HCT116 (cell line): ENCODE measurements at regions of chr17 and their contacts with region 1.

Region 1: DNA sequence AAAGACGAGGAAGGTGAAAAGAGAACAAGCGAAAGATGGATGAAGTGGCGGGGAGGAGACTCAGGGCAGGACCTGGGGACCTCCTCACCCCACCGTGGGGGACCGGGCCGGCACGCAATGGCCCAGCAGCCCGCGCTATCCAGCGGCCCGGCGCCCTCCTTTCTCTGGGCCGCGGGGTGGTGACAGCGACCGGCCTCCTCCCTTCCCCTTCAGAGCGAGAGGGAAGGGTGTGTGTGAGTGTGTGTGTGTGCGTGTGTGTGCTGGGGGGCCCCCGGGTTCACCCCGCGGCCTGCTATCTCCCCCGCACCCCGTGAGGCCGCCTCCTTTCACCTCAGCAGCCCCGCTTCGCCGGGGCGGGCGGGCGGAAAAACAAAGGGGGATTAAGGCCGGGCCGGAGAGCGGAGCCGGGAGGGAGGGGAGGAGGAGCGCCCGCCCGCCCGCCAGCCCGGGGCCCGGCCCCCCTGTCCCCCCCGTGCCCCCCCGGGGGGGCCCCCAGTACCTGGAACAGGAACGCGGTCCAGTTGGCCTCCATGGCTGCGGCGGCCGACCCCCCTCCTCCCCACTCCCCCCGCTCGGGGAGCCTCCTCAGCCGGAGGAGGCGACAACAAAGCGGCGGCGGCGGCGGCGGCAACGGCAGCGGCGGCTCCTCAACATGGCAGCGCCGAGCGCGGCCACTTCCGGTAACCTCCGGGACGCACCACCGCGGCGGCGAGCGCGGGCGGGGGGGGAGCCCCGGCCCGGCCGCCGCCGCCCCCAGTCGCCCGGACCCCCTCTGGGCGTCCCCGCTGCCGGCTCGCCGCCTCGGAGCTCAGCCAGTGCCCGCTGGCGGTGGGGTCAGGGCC is at the start of gene VEZF1:
- DNase-seq: peak; percentile 48
- ATAC-seq: peak; percentile 64
- H3K4me3 ChIP-seq: peak within 1 kb of the TSS; percentile 67 to 73
- H3K27ac ChIP-seq: peak within 1 kb of the TSS; percentile 96
- H3K4me1 ChIP-seq: peaks cover 62 to 71% of the 10 kb centered on the region in 2 experiments
- H3K27me3 ChIP-seq: no peaks in the 10 kb centered on the region
- CTCF ChIP-seq: no peak
- POLR2A ChIP-seq: peak; percentile 32
- RAD21 ChIP-seq: 0 out of 2 replicates have a peak, but pooled peaks have one; percentile 10
- total RNA-seq, gene VEZF1: 70.2 TPM

Region 2: DNA sequence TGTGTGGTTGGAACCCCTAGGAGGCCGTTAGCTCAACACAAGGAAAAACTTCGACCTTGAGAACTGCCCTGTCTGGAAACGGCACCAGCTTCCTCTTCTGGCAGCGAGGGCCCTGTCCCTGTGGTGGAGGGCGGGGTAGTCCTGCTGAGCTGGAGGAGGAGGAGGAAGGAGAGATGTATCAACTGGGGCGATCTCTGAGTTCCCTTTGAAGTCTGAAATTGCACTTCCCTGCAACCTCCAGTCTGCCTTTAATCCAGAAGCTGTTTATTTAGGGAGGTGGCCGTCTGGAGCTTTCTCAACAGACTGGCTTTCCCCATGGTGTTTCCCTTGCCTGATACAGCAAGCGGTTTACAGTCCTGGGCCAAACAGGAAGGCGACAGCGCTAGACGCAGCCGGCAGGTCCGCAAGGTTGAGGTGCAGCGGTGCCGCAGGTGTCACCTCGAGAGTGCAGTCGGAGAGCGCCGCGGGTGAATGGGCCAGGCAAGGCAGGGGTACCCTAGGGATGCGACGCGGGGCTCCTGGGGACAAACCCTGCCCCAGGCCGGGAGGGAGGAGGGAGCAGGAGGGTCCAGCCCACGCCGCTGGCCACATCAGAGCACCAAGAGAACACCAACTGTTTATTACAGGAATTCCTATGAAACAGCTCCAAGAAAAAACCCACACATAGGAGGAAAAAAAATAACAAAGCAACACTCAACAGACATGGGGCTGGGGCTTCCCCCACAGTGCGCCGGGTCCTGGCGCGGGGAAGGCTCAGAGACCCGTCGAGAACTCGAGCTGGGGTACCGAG is 126.6 kb before region 1 on chr17:
- CTCF ChIA-PET with region 1: interaction called, 288 read pairs
- POLR2A ChIA-PET with region 1: interaction called, 9 read pairs
- RAD21 ChIA-PET with region 1: interaction called, 3 to 4 read pairs
- intact Hi-C with region 1: no loop called
- DNase-seq: peak; percentile 75
- ATAC-seq: peak; percentile 68
- H3K4me3 ChIP-seq: peak overlapping the region; percentile 38 to 51
- H3K27ac ChIP-seq: peak overlapping the region; percentile 79
- H3K4me1 ChIP-seq: peaks cover 54 to 80% of the 10 kb centered on the region in 2 experiments
- H3K27me3 ChIP-seq: no peaks in the 10 kb centered on the region
- CTCF ChIP-seq: 0 out of 6 replicates have a peak, but pooled peaks of 1 of the 3 experiments have one; percentile 5
- POLR2A ChIP-seq: no peak
- RAD21 ChIP-seq: no peak

Region 3: DNA sequence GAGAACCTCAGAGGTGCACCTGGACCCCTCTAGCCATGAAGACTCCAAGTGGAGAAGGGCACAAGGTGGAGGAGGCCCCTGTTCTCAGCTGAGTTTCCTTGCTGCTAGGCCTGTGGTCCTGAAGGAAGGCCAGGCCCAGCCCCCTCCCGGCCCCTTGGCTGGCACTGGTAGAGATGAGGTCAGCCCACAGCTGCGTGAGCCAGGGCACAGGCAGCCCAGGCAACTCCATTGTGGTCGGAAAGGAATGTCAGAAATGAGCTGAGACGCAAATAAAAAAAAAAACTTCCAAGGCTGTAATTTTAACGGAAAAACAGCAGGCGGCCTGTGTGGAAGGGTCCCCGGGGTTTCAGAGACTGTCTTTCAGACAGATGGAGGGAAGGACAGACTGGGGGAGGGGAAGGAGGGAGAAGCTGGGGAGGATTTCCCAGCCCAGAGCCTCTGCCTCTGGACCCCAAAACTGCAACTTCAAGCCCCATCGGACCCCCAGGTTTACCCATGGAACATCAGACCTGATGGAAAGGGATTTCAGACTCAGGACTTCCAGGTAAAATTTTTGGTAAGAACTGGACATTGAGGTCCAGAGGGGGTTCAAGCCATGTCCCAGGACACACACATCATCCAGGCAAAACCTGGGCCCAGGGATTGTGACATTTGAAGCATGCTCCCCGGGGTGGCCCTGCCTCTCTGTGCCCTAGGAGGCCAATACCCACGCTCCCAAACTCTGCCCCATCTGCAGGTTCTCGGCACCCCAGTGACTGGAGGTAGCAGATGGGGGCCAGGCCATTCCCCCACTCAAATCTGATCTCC is 112.3 kb before region 1 on chr17:
- CTCF ChIA-PET with region 1: interaction called, 3 read pairs
- POLR2A ChIA-PET with region 1: no interaction called
- RAD21 ChIA-PET with region 1: interaction called in 1 of 2 experiments, 3 read pairs
- intact Hi-C with region 1: loop called (anchors 5 kb)
- DNase-seq: peak; percentile 90
- ATAC-seq: peak; percentile 81
- H3K4me3 ChIP-seq: peak overlapping the region; percentile 17 to 45
- H3K27ac ChIP-seq: peak overlapping the region; percentile 68
- H3K4me1 ChIP-seq: peaks cover 71 to 98% of the 10 kb centered on the region in 2 experiments
- H3K27me3 ChIP-seq: no peaks in the 10 kb centered on the region
- CTCF ChIP-seq: peak in 2 of 3 experiments; percentile 55 to 60; a peak in 4 of 6 replicates
- POLR2A ChIP-seq: no peak
- RAD21 ChIP-seq: no peak

Region 4: GRCh38 chr17:57892146-57892828 is 95.5 kb before region 1 on chr17:
- CTCF ChIA-PET with region 1: interaction called, 5 read pairs
- POLR2A ChIA-PET with region 1: interaction called, 5 read pairs
- RAD21 ChIA-PET with region 1: interaction called, 3 to 7 read pairs
- intact Hi-C with region 1: loop called (anchors 1 kb)
- DNase-seq: peak; percentile 81
- ATAC-seq: peak; percentile 71
- H3K4me3 ChIP-seq: peak overlapping the region; percentile 27 to 40
- H3K27ac ChIP-seq: peak overlapping the region; percentile 82
- H3K4me1 ChIP-seq: peaks cover 67 to 83% of the 10 kb centered on the region in 2 experiments
- H3K27me3 ChIP-seq: no peaks in the 10 kb centered on the region
- CTCF ChIP-seq: peak in 2 of 3 experiments; percentile 99 to 100; a peak in 4 of 6 replicates
- POLR2A ChIP-seq: no peak
- RAD21 ChIP-seq: no peak

Region 5: GRCh38 chr17:57946798-57947358 is 40.9 kb before region 1 on chr17:
- CTCF ChIA-PET with region 1: no interaction called
- POLR2A ChIA-PET with region 1: interaction called, 8 read pairs
- RAD21 ChIA-PET with region 1: interaction called in 1 of 2 experiments, 3 read pairs
- intact Hi-C with region 1: loop called (anchors 2 kb)
- DNase-seq: no peak
- ATAC-seq: no peak
- H3K4me3 ChIP-seq: peak overlapping the region; percentile 21 to 48
- H3K27ac ChIP-seq: peak overlapping the region; percentile 97
- H3K4me1 ChIP-seq: peaks cover 90 to 98% of the 10 kb centered on the region in 2 experiments
- H3K27me3 ChIP-seq: no peaks in the 10 kb centered on the region
- CTCF ChIP-seq: no peak
- POLR2A ChIP-seq: no peak
- RAD21 ChIP-seq: no peak

Region 6: DNA sequence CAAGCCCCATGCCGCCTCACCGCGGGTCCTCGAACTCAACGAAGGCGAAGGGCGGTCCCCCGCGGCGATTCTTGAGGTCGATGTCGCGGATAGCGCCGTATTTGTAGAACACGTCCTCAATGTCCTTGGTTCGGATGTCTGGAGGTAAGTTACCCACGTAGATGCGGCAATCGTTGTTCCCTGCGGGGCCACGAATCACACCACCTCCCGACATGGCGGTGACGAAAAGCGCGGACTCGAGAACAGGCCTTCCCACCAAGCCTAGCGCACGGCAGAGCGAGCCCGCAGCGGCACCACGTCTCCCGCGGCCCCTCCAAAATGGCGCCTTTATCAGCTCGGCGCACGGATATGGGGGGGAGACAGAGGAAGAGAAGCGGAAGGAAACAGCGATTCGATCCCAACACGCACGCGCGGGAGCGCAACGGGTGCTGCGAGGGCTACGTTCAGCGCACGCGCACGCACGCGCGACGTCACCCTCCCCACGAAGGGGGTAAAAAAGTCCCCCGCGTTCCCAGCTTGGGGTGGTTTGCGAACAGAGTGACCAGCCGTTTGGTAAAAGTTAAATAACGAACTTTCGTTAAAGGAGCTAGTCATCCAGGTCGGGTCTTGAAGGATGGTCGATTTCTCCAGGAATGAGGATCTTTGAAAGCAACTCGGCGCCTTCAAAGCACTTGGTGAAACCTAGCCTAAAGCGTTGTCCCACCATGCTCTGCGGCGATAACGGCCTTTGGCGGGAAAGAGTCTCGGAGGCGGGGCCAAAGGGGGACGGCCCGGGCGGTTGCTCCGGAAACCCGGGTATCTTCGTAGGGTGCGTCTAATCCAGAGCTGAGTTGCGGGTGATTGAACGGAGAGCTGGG is 19.4 kb after region 1 on chr17 and contains the start of gene SRSF1:
- CTCF ChIA-PET with region 1: interaction called, 57 read pairs
- POLR2A ChIA-PET with region 1: interaction called, 30 read pairs
- RAD21 ChIA-PET with region 1: no interaction called
- intact Hi-C with region 1: no loop called
- DNase-seq: peak; percentile 99
- ATAC-seq: peak; percentile 86
- H3K4me3 ChIP-seq: peak within 1 kb of the TSS; percentile 88 to 94
- H3K27ac ChIP-seq: peak within 1 kb of the TSS; percentile 100
- H3K4me1 ChIP-seq: peaks cover 24 to 41% of the 10 kb centered on the region in 2 experiments
- H3K27me3 ChIP-seq: no peaks in the 10 kb centered on the region
- CTCF ChIP-seq: no peak
- POLR2A ChIP-seq: peak; percentile 85
- RAD21 ChIP-seq: no peak
- total RNA-seq, gene SRSF1: 434 TPM